CD8-positive, alpha-beta memory T cell (primary cell): ENCODE measurements at regions of chr2 and their contacts with region 1.

Region 1: DNA sequence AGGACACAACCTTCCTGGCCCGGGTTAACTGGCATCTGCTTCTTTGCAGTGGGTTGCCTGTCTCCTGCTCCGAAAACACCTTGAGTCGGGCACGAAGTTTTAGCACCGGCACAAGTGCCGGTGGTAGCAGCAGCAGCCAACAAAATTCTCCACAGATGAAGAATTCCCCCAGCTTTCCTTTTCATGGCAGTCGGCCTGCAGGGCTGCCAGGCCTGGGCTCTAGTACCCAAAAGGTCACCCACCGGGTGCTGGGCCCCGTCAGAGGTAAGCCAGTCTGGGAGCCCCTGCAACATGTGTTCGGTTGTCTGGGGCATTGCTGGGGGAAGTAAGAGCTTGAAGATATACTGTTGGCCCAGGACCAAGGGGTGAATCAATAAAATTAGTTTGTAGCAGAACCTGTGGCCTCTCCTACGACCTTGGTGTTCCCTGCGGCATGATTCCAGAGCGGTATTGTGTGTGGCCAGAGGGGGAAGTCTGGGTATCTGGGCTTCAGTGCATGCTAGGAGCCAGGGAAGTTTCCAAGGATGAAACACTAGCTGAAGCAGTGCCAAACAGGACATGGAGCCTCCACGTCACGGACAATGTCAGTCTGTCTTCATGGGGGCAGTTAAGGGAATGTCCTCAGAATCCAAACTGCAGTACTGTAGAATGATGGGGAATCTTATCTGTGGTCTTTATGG is 7.8 kb downstream of the AGBL5 start:
- DNase-seq: no peak
- H3K4me3 ChIP-seq: no peak overlapping the region
- H3K4me3 Mint-ChIP-seq: no peak overlapping the region
- H3K27ac ChIP-seq: no peak overlapping the region
- H3K27ac Mint-ChIP-seq: peak overlapping the region in 2 of 8 donors; percentile 17 to 42
- H3K4me1 ChIP-seq: no peaks in the 10 kb centered on the region
- H3K4me1 Mint-ChIP-seq: peaks cover 2 to 12% (median 11%) of the 10 kb centered on the region in 3 donors
- H3K27me3 ChIP-seq: no peaks in the 10 kb centered on the region
- H3K27me3 Mint-ChIP-seq: peaks cover 0 to 2% of the 10 kb centered on the region in 2 donors

Region 2: GRCh38 chr2:27042159-27042661 is 17.1 kb before region 1 on chr2:
- CTCF ChIA-PET with region 1: no interaction called
- POLR2A ChIA-PET with region 1: no interaction called
- DNase-seq: no peak
- H3K4me3 ChIP-seq: no peak overlapping the region
- H3K4me3 Mint-ChIP-seq: no peak overlapping the region
- H3K27ac ChIP-seq: no peak overlapping the region
- H3K27ac Mint-ChIP-seq: peak overlapping the region in 4 of 8 donors; percentile 1 to 68 (median 48)
- H3K4me1 ChIP-seq: no peaks in the 10 kb centered on the region
- H3K4me1 Mint-ChIP-seq: no peaks in the 10 kb centered on the region
- H3K27me3 ChIP-seq: no peaks in the 10 kb centered on the region
- H3K27me3 Mint-ChIP-seq: no peaks in the 10 kb centered on the region

Region 3: GRCh38 chr2:27162151-27163121 is 103.2 kb after region 1 on chr2:
- CTCF ChIA-PET with region 1: no interaction called
- POLR2A ChIA-PET with region 1: no interaction called
- DNase-seq: no peak
- H3K4me3 ChIP-seq: no peak overlapping the region
- H3K4me3 Mint-ChIP-seq: peak overlapping the region in 1 of 7 donors; percentile 28
- H3K27ac ChIP-seq: no peak overlapping the region
- H3K27ac Mint-ChIP-seq: peak overlapping the region in 1 of 8 donors; percentile 15
- H3K4me1 ChIP-seq: no peaks in the 10 kb centered on the region
- H3K4me1 Mint-ChIP-seq: no peaks in the 10 kb centered on the region
- H3K27me3 ChIP-seq: no peaks in the 10 kb centered on the region
- H3K27me3 Mint-ChIP-seq: peaks cover 6 to 7% of the 10 kb centered on the region in 2 donors

Region 4: GRCh38 chr2:27211241-27211828 is 152.1 kb after region 1 on chr2:
- CTCF ChIA-PET with region 1: no interaction called
- POLR2A ChIA-PET with region 1: interaction called, 10 read pairs
- DNase-seq: no peak
- H3K4me3 ChIP-seq: peak overlapping the region; percentile 80
- H3K4me3 Mint-ChIP-seq: peak overlapping the region; percentile 91 to 100 (median 95)
- H3K27ac ChIP-seq: peak overlapping the region; percentile 99
- H3K27ac Mint-ChIP-seq: peak overlapping the region; percentile 86 to 98 (median 93)
- H3K4me1 ChIP-seq: peaks cover 15% of the 10 kb centered on the region
- H3K4me1 Mint-ChIP-seq: peaks cover 30 to 38% (median 35%) of the 10 kb centered on the region in 3 donors
- H3K27me3 ChIP-seq: no peaks in the 10 kb centered on the region
- H3K27me3 Mint-ChIP-seq: peaks cover 0 to 2% of the 10 kb centered on the region in 2 donors